ENCODE measurements at regions of chr2 and their contacts with region 1.

Region 1: DNA sequence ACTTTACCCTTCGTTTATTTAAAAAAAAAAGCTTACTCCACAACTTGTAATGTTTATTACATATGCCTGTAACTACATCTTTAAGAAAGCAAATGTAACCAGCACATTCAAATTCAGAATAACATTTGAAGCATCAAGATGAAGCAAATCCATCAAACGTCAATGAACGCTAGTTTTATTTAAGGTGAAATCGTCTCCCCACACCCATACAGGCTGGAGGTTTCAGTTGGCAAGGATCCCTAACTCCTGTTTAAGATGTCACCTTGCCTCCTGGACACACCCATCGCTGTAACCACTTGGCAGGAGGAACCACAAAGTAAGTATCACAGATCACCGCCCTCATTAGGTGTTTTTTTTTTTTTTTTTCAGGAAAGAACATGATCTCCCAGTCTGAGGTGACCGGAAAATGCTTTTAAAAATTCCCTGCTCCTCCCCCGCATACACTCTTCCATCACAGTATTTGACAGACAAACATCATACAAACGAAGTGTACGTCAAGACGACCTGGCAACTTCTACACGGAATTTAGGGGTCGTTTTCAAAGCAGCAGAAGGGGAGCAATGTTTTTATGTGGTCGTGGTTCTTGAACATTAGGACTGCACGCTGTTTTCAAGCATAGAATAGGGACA is 19.7 kb upstream of the STPG4 start:
- DNase-seq: peak; percentile 93
- H3K4me3 ChIP-seq: peak overlapping the region; percentile 91 to 98 (median 93)
- H3K27ac ChIP-seq: peak overlapping the region; percentile 99
- H3K4me1 ChIP-seq: peaks cover 30% of the 10 kb centered on the region
- H3K27me3 ChIP-seq: no peaks in the 10 kb centered on the region
- CTCF ChIP-seq: no peak

Region 2: GRCh38 chr2:47283659-47284058 is 108.8 kb after region 1 on chr2:
- CTCF ChIA-PET with region 1: no interaction called
- dilution Hi-C with region 1: loop called (anchors 5 kb)
- in situ Hi-C with region 1: no loop called
- intact Hi-C with region 1: no loop called
- DNase-seq: no peak
- H3K4me3 ChIP-seq: no peak overlapping the region
- H3K27ac ChIP-seq: no peak overlapping the region
- H3K4me1 ChIP-seq: no peaks in the 10 kb centered on the region
- H3K27me3 ChIP-seq: no peaks in the 10 kb centered on the region
- CTCF ChIP-seq: no peak

Measured in mammary epithelial cell (primary cell).